Motor neuron (in vitro differentiated cells): ENCODE measurements at regions of chr10 and their contacts with region 1.

Region 1: DNA sequence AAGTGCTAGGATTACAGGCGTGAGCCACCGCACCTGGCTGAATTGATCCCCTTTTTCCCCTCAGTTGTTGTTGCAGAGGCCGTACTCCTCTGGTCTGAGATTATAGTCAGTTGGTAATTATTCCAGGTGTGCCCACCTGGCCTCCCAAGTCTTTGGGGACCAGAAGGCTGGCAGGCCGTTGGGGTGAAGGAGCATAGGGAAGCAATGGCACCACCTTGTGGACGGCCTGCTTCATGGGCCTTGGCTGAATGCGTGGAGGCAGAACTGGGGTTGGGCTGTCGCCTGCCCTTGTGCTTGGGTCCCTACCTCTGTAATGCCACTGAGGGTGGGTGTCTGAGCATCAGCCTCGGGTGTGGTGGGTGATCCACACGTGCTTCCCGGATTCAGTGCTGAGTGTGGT is 125.7 kb downstream of the RGS10 start:
- ATAC-seq: peak in 4 of 8 experiments; percentile 14 to 78 (median 33)
- H3K4me3 ChIP-seq: no peak overlapping the region
- H3K27ac ChIP-seq: no peak overlapping the region
- H3K4me1 ChIP-seq: peaks cover 40 to 42% of the 10 kb centered on the region in 2 donors

Region 2: DNA sequence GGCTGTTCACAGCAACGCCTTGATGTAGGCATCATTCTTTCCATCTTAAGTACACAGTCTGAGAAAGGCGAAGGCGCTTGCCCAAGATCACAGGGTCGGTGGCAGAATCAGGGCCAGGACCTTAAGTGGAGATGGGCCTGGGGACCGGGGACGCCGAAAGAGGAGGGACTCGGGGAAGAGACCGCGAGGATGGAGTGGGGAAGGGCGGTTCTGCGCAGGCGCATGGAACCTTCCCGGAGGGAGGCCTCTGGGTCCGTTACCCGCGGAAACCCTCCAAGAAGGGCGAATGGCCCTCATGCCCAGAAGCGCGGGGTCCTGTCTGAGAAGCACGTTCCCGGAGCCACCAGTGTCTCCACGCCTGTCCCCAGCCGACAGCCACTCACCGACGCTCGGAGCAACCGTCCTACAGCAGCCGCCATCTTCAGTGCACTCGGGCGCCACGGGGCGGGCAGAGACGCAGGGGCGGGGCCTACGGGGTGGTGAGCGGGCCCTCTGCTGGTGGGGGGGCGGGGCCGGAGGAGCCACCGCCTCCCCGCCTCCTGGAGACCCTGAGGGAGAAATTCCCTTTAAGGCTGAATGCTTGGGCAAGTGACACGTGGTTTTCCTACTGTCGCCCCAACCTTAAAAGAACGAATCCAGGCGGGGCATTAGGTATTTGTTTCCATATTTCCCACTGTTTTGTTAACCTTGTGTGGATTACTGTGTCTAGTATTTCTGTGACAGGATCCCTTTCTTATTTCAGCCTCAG is 238.3 kb before region 1 on chr10 and contains the start of gene PRDX3:
- in situ Hi-C with region 1: loop called in 1 of 9 experiments (anchors 25 kb)
- ATAC-seq: peak; percentile 95 to 98 (median 96)
- H3K4me3 ChIP-seq: peak within 1 kb of the TSS; percentile 83 to 100 (median 98)
- H3K27ac ChIP-seq: peak within 1 kb of the TSS; percentile 97 to 99
- H3K4me1 ChIP-seq: peaks cover 6 to 7% of the 10 kb centered on the region in 2 donors
- total RNA-seq, gene PRDX3: 78.5 to 191 (median 129) TPM

Region 3: GRCh38 chr10:119207367-119207668 is 209.5 kb before region 1 on chr10 and contains the start of gene GRK5:
- in situ Hi-C with region 1: loop called in 6 of 9 experiments (anchors 25 kb)
- ATAC-seq: peak; percentile 77 to 89 (median 85)
- H3K4me3 ChIP-seq: peak within 1 kb of the TSS; percentile 62 to 90 (median 70)
- H3K27ac ChIP-seq: peak within 1 kb of the TSS; percentile 83 to 86
- H3K4me1 ChIP-seq: peaks cover 26 to 28% of the 10 kb centered on the region in 2 donors
- total RNA-seq, gene GRK5: 4.0 to 27.2 (median 11.1) TPM

Region 4: DNA sequence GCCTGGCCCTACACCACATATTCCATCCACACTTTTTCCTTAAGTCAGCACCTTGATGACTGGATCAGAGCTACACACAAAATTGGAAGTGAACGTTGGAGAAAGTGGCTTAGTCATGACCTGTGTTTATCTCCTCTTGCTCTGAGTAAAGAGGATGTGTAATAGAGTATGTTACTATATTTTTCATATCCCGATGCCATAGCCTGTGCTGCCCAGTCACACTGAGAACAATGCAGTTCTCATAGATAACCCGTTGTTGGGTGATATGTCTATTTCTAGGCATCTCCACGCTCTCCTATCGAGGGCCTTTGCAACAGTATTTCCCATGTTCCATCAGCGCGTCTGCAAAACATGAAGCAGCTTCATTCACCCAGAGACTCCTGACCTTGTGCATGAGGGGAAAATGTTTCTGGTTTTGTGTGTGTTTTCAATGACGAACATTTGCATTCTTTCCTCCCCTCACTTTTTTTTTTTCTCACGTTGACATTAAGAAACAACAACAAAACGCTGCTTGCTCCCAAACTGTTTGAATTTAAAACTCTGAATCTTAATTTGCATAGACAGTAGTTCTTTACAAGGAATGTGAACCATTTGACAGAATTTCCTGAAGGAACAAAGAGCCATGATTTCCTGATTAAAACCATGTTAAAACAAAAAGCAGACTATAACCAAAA is 166.1 kb before region 1 on chr10:
- in situ Hi-C with region 1: no loop called
- ATAC-seq: peak in 2 of 8 experiments; percentile 1
- H3K4me3 ChIP-seq: no peak overlapping the region
- H3K27ac ChIP-seq: no peak overlapping the region
- H3K4me1 ChIP-seq: peaks cover 32 to 50% of the 10 kb centered on the region in 2 donors